ENCODE measurements at regions of chr15 and their contacts with region 1.

Region 1: GRCh38 chr15:100572362-100572983 is 29.5 kb downstream of the LINS1 start:
- DNase-seq: no peak
- ATAC-seq: peak in 1 of 2 donors; percentile 27

Region 2: DNA sequence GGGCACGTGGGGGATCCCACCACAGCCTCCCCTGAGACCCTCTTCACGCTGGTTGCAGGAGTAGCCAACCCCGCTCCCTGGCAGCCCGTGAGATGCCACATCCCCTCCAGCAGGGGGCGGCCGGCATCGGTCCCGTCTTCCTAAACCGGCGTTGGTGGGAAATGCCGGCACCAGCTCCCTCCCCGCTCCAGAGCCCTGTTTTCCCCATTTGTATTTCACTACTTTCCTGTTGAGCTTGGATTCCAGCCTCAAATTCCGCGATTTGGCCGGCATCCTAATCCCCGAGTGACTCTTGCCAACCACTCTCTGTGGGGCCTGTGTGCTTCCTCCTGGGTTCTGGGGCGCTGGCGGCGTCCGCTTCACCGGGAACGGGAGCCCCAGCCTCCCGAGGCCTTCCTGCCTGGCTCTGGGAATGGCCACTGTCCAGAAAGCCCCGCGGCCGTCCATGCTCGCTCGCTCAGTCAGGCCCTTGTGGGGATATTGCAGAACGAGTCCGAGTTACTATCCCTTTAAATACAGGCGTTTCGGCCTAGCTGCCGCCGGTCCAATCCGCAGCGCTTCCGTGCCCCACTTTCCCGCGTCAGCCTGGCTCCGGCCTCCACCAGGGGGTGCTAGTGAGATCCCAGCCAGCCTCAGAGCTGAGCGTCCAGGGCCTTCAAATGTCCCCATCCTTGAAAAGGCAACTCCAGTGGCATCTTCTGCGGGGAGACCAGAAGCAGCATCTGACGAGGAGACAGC is 222.6 kb before region 1 on chr15:
- intact Hi-C with region 1: loop called in 1 of 2 experiments (anchors 5 kb)
- DNase-seq: peak; percentile 94
- ATAC-seq: peak; percentile 96 to 97